Common myeloid progenitor, CD34-positive (primary cell): ENCODE measurements at regions of chr4 and their contacts with region 1.

Region 1: DNA sequence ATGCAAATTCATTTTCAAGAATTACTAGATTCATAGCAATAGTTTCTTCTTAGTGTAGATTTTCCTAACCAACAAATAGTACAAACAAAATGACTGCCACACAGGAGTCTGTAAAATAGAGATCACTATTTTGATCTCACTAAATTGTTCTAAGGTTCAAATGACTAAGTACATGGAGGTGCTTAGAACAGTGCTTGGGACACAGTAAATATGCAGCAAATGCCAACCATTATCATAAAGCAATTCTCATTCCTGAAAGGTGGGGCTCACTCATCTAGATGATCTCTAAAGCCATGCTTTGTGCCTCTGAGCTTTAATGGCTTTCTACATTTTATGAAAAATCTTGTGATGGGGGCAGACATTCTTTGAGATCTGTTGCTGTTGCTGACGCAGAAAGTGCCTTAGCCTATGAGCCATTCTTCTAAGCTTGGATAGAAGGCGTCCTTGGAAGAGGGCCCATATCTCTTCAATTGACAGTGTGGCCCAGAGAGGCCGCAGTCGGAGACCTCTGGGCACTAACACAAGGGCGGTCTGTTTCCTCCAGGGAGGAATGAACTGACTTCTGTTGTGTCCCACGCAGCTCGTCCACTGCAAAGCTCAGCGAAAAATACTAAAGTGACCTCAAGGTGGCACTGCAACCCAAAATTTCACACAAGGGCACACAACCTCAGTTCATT is 23.5 kb downstream of the TLR10 start:
- DNase-seq: peak; percentile 75 to 79 (median 78)
- H3K4me3 ChIP-seq: no peak overlapping the region
- H3K27ac ChIP-seq: no peak overlapping the region
- H3K4me1 ChIP-seq: peaks cover 18 to 46% (median 21%) of the 10 kb centered on the region in 4 experiments
- H3K27me3 ChIP-seq: no peaks in the 10 kb centered on the region

Region 2: GRCh38 chr4:38723726-38724474 is 35.4 kb before region 1 on chr4:
- CTCF ChIA-PET with region 1: no interaction called
- POLR2A ChIA-PET with region 1: no interaction called
- DNase-seq: no peak
- H3K4me3 ChIP-seq: peak overlapping the region in 1 of 7 experiments; percentile 34
- H3K27ac ChIP-seq: no peak overlapping the region
- H3K4me1 ChIP-seq: peaks cover 3 to 16% (median 7%) of the 10 kb centered on the region in 4 experiments
- H3K27me3 ChIP-seq: no peaks in the 10 kb centered on the region

Region 3: GRCh38 chr4:38782452-38783108 is 23.3 kb after region 1 on chr4 and contains the start of gene TLR10:
- CTCF ChIA-PET with region 1: interaction called, 220 read pairs
- POLR2A ChIA-PET with region 1: no interaction called
- DNase-seq: peak; percentile 54 to 79 (median 79)
- H3K4me3 ChIP-seq: peak within 1 kb of the TSS in 1 of 7 experiments; percentile 23
- H3K27ac ChIP-seq: no peak within 1 kb of the TSS
- H3K4me1 ChIP-seq: peaks cover 0 to 24% (median 6%) of the 10 kb centered on the region in 4 experiments
- H3K27me3 ChIP-seq: no peaks in the 10 kb centered on the region

Region 4: DNA sequence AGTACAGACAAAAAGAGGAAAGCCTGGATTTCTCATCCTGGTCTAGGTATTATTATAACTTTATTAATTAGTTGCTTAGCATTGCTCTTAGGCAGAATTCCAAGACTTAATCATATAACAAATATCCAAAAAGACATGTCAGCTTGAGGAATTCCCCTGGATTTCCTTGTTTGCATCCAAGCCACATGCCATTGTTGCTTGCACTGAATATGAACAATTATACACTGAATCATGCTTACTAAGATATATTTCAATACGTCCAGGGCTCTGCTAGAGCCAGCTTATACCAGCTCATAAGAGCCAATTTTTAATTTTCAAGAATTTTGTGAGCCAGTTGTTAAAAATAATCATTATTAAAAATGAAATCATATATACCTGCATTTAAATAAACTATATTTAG is 29.1 kb after region 1 on chr4:
- CTCF ChIA-PET with region 1: interaction called, 220 read pairs
- POLR2A ChIA-PET with region 1: no interaction called
- DNase-seq: no peak
- H3K4me3 ChIP-seq: no peak overlapping the region
- H3K27ac ChIP-seq: no peak overlapping the region
- H3K4me1 ChIP-seq: peaks cover 0 to 25% (median 13%) of the 10 kb centered on the region in 4 experiments
- H3K27me3 ChIP-seq: no peaks in the 10 kb centered on the region

Region 5: GRCh38 chr4:38804654-38805295 is 45.5 kb after region 1 on chr4 and contains the start of gene TLR1:
- CTCF ChIA-PET with region 1: interaction called, 67 read pairs
- POLR2A ChIA-PET with region 1: interaction called, 4 read pairs
- DNase-seq: peak; percentile 73 to 92 (median 92)
- H3K4me3 ChIP-seq: peak within 1 kb of the TSS in 6 of 7 experiments; percentile 58 to 78 (median 73)
- H3K27ac ChIP-seq: peak within 1 kb of the TSS; percentile 73 to 82
- H3K4me1 ChIP-seq: peaks cover 14 to 31% (median 24%) of the 10 kb centered on the region in 4 experiments
- H3K27me3 ChIP-seq: no peaks in the 10 kb centered on the region

Region 6: GRCh38 chr4:38856524-38857337 is 97.5 kb after region 1 on chr4 and contains the start of gene TLR6:
- CTCF ChIA-PET with region 1: interaction called, 54 read pairs
- POLR2A ChIA-PET with region 1: no interaction called
- DNase-seq: peak; percentile 88 to 94 (median 93)
- H3K4me3 ChIP-seq: peak within 1 kb of the TSS in 6 of 7 experiments; percentile 66 to 89 (median 70)
- H3K27ac ChIP-seq: peak within 1 kb of the TSS; percentile 64 to 86
- H3K4me1 ChIP-seq: peaks cover 9 to 34% (median 25%) of the 10 kb centered on the region in 4 experiments
- H3K27me3 ChIP-seq: no peaks in the 10 kb centered on the region

Region 7: GRCh38 chr4:38872604-38873006 is 113.4 kb after region 1 on chr4:
- CTCF ChIA-PET with region 1: interaction called, 38 read pairs
- POLR2A ChIA-PET with region 1: no interaction called
- DNase-seq: no peak
- H3K4me3 ChIP-seq: no peak overlapping the region
- H3K27ac ChIP-seq: no peak overlapping the region
- H3K4me1 ChIP-seq: peaks cover 0 to 7% (median 5%) of the 10 kb centered on the region in 4 experiments
- H3K27me3 ChIP-seq: no peaks in the 10 kb centered on the region

Region 8: GRCh38 chr4:38889143-38889542 is 129.9 kb after region 1 on chr4:
- CTCF ChIA-PET with region 1: interaction called, 24 read pairs
- POLR2A ChIA-PET with region 1: no interaction called
- DNase-seq: peak; percentile 40 to 83 (median 78)
- H3K4me3 ChIP-seq: peak overlapping the region in 1 of 7 experiments; percentile 50
- H3K27ac ChIP-seq: no peak overlapping the region
- H3K4me1 ChIP-seq: peaks cover 2 to 13% (median 4%) of the 10 kb centered on the region in 4 experiments
- H3K27me3 ChIP-seq: no peaks in the 10 kb centered on the region